Natural killer cell (primary cell): ENCODE measurements at regions of chr11 and their contacts with region 1.

Region 1: DNA sequence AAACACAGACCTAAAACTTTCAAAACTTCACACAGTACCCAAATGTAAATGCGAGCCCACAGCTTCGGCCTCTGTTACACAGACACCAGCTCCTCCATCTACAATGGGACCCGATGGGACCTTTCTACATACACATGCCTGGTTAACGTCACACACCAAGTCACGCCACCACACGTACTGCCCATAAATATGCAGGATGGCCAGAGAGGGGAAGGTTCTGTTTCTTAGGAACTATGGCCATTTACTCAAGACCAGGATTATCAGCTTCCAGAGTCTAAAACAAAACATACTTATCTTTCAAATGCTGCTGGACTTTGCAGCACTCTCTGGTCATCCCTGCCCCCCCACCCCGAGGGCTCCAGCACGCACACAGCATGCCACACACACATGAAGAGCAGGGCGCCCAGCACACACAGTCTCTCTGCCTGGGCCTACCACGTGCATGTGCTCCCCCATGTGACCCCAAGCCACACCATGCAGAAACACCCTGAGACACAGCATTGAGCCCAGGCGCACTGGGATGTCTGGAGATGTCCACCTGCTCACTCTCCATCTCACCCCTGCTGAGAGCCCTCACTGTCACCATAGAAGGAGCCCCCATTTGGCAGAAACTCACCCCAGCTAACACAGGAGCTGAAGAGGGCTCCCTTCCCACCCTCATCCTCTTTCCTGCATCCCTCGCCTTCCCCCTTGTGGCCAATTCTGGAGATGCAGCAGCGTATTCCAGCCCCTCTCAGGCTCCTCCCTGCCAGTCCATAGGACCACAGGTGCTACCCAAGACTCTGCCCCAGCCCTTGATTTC is 61.8 kb downstream of the SLC22A12 start:
- DNase-seq: peak; percentile 66 to 80
- ATAC-seq: peak; percentile 70 to 90 (median 88)
- H3K4me3 ChIP-seq: no peak overlapping the region
- H3K4me3 Mint-ChIP-seq: no peak overlapping the region
- H3K27ac ChIP-seq: no peak overlapping the region
- H3K27ac Mint-ChIP-seq: no peak overlapping the region
- H3K4me1 ChIP-seq: peaks cover 36% of the 10 kb centered on the region
- H3K4me1 Mint-ChIP-seq: peaks cover 0 to 6% of the 10 kb centered on the region in 2 donors
- H3K27me3 ChIP-seq: no peaks in the 10 kb centered on the region
- H3K27me3 Mint-ChIP-seq: peaks cover 0 to 7% of the 10 kb centered on the region in 2 donors
- CTCF ChIP-seq: peak; percentile 59

Region 2: GRCh38 chr11:64448599-64449556 is 203.9 kb before region 1 on chr11:
- intact Hi-C with region 1: loop called (anchors 1 kb)
- DNase-seq: peak; percentile 72 to 80
- ATAC-seq: peak; percentile 80 to 85 (median 83)
- H3K4me3 ChIP-seq: peak overlapping the region; percentile 15
- H3K4me3 Mint-ChIP-seq: peak overlapping the region; percentile 79
- H3K27ac ChIP-seq: no peak overlapping the region
- H3K27ac Mint-ChIP-seq: peak overlapping the region in 1 of 2 donors; percentile 75
- H3K4me1 ChIP-seq: peaks cover 22% of the 10 kb centered on the region
- H3K4me1 Mint-ChIP-seq: peaks cover 14 to 19% of the 10 kb centered on the region in 2 donors
- H3K27me3 ChIP-seq: no peaks in the 10 kb centered on the region
- H3K27me3 Mint-ChIP-seq: peaks cover 5 to 17% of the 10 kb centered on the region in 2 donors
- CTCF ChIP-seq: peak; percentile 54

Region 3: DNA sequence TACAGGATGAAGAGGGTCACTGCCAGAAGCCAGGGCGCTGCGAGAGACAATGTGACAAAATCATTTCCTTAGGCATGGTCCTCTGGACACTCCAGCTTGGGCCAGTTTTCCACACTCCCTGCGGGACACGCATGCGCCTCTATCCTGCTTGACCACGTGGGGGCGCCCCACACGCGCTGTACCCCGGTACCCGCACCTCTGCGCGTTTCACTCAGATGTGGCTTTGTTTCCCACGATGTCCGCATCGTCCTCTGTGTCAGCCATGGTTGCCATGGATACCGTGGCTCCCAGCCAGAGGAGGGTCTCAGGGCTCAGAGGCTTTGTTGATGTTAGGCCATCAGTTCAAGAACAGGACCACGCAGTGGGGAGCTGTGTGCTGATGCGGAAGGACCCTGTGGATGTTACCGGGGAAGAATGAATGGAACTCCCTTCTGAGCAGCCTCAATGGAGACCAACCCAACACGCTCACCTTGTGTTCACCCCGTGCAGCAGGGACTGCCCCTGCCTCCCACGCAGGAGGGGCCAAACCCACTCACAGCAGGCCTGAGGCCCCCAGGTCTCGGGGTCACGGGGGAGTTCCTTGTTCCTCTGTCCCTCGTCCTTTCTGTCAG is 162.9 kb before region 1 on chr11:
- intact Hi-C with region 1: loop called (anchors 1 kb)
- DNase-seq: peak; percentile 37 to 59
- ATAC-seq: peak; percentile 49 to 74 (median 68)
- H3K4me3 ChIP-seq: no peak overlapping the region
- H3K4me3 Mint-ChIP-seq: no peak overlapping the region
- H3K27ac ChIP-seq: no peak overlapping the region
- H3K27ac Mint-ChIP-seq: peak overlapping the region in 1 of 2 donors; percentile 54
- H3K4me1 ChIP-seq: peaks cover 4% of the 10 kb centered on the region
- H3K4me1 Mint-ChIP-seq: peaks cover 9 to 18% of the 10 kb centered on the region in 2 donors
- H3K27me3 ChIP-seq: no peaks in the 10 kb centered on the region
- H3K27me3 Mint-ChIP-seq: peaks cover 21 to 49% of the 10 kb centered on the region in 2 donors
- CTCF ChIP-seq: peak; percentile 50

Region 4: GRCh38 chr11:64553551-64554201 is 99.1 kb before region 1 on chr11:
- intact Hi-C with region 1: loop called (anchors 5 kb)
- DNase-seq: peak; percentile 40 to 77
- ATAC-seq: peak; percentile 61 to 67 (median 64)
- H3K4me3 ChIP-seq: no peak overlapping the region
- H3K4me3 Mint-ChIP-seq: no peak overlapping the region
- H3K27ac ChIP-seq: no peak overlapping the region
- H3K27ac Mint-ChIP-seq: peak overlapping the region in 1 of 2 donors; percentile 69
- H3K4me1 ChIP-seq: no peaks in the 10 kb centered on the region
- H3K4me1 Mint-ChIP-seq: peaks cover 6 to 11% of the 10 kb centered on the region in 2 donors
- H3K27me3 ChIP-seq: no peaks in the 10 kb centered on the region
- H3K27me3 Mint-ChIP-seq: no peaks in the 10 kb centered on the region
- CTCF ChIP-seq: peak; percentile 72